Activated CD4-positive, alpha-beta memory T cell treated with anti-CD3 and anti-CD28 coated beads, Interleukin-2, amount 10 ng/mL, durations not matched to agents 7 days and 5 days (primary cell): ENCODE measurements at regions of chr9 and their contacts with region 1.

Region 1: GRCh38 chr9:133782157-133783130 is 44.3 kb upstream of the SARDH start:
- DNase-seq: peak; percentile 69
- H3K4me3 Mint-ChIP-seq: no peak overlapping the region
- H3K27ac Mint-ChIP-seq: no peak overlapping the region
- H3K4me1 Mint-ChIP-seq: peaks cover 10% of the 10 kb centered on the region
- H3K27me3 Mint-ChIP-seq: no peaks in the 10 kb centered on the region

Region 2: GRCh38 chr9:133750982-133751649 is 31.3 kb before region 1 on chr9:
- CTCF ChIA-PET with region 1: no interaction called
- POLR2A ChIA-PET with region 1: no interaction called
- DNase-seq: no peak
- H3K4me3 Mint-ChIP-seq: no peak overlapping the region
- H3K27ac Mint-ChIP-seq: no peak overlapping the region
- H3K4me1 Mint-ChIP-seq: no peaks in the 10 kb centered on the region
- H3K27me3 Mint-ChIP-seq: peaks cover 40% of the 10 kb centered on the region

Region 3: GRCh38 chr9:133792721-133793470 is 10.5 kb after region 1 on chr9:
- CTCF ChIA-PET with region 1: interaction called, 10 read pairs
- POLR2A ChIA-PET with region 1: no interaction called
- DNase-seq: peak; percentile 48
- H3K4me3 Mint-ChIP-seq: no peak overlapping the region
- H3K27ac Mint-ChIP-seq: no peak overlapping the region
- H3K4me1 Mint-ChIP-seq: no peaks in the 10 kb centered on the region
- H3K27me3 Mint-ChIP-seq: no peaks in the 10 kb centered on the region

Region 4: DNA sequence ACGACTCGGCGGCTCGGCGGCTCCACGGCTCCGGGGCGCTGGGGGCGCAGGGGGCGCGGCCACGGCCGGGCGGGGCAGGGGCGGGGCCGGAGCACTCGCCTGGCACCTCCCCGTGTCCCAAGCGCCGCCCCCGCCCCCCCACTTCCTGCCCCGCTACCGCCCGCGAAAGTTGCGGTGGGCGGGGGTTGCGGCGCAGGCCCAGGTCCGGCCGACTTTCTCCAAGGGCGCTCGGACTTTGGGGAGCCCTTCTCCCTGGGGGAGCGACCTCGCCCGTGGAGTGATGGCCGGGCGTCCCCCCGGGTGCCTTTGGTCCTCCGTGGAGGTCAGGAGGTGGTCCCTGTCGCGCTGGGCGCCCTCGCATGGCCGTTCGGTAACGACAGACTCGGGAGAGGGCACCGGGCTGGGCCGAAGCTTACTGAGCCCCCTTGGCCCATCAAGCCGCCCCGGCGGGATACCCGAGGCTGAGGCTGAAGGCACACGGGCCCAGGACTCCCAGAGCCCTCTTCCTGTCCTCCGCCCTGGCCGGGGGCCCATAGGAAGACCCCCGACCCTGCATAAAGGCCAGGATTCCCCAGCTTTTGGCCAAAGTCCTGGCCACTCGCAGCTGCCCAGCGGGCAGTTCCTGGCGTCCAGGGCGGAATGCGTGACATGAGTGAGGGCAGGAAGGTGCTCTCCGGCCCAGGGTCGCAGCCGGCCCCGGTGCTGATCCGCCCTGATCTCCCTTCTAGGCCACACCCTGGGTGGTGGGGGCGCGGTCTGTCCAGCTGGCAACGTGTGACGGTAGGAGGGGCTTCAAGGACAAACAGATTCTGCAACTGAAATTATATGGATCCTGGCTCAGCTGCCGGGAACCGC is 210.6 kb after region 1 on chr9:
- CTCF ChIA-PET with region 1: interaction called, 79 read pairs
- POLR2A ChIA-PET with region 1: interaction called, 9 read pairs
- DNase-seq: peak; percentile 72
- H3K4me3 Mint-ChIP-seq: peak overlapping the region; percentile 59
- H3K27ac Mint-ChIP-seq: no peak overlapping the region
- H3K4me1 Mint-ChIP-seq: peaks cover 1% of the 10 kb centered on the region
- H3K27me3 Mint-ChIP-seq: peaks cover 17% of the 10 kb centered on the region

Region 5: DNA sequence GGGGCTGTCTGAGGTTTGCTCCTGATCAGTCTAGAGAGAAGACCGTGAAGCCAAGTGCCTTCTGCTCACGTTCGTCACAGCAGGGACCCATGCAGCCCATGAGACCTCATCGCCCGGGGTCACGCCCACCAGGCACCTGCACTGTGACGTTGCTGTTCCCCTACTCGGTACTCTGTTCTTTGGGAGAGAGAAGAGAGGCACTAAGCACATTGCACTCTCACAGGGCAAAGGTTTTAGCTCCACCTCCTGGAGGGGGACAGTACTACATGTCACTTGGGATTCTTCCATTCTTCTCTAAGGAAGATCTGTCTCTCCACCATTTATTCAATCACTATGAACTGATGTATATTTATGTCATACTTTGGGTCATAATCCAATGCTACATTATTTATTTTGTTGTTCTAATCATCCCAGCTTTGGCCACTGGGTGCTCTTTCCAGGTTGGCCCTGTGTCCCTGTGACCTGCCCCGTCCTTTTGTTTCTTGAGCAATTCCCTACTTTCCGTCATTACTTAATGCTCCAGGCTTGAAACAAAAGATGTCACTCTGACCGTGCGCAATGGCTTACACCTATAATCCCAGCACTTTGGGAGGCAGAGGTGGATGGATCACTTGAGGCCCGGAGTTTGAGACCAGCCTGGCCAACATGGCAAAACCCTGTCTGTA is 316.8 kb after region 1 on chr9:
- CTCF ChIA-PET with region 1: interaction called, 10 read pairs
- POLR2A ChIA-PET with region 1: no interaction called
- DNase-seq: peak; percentile 58
- H3K4me3 Mint-ChIP-seq: no peak overlapping the region
- H3K27ac Mint-ChIP-seq: no peak overlapping the region
- H3K4me1 Mint-ChIP-seq: no peaks in the 10 kb centered on the region
- H3K27me3 Mint-ChIP-seq: no peaks in the 10 kb centered on the region

Region 6: GRCh38 chr9:134217832-134218629 is 435.6 kb after region 1 on chr9:
- CTCF ChIA-PET with region 1: no interaction called
- POLR2A ChIA-PET with region 1: no interaction called
- DNase-seq: peak; percentile 24
- H3K4me3 Mint-ChIP-seq: no peak overlapping the region
- H3K27ac Mint-ChIP-seq: no peak overlapping the region
- H3K4me1 Mint-ChIP-seq: no peaks in the 10 kb centered on the region
- H3K27me3 Mint-ChIP-seq: no peaks in the 10 kb centered on the region